Heart left ventricle (tissue), 16 donors: ENCODE measurements at regions of chr15 and their contacts with region 1.

Region 1: DNA sequence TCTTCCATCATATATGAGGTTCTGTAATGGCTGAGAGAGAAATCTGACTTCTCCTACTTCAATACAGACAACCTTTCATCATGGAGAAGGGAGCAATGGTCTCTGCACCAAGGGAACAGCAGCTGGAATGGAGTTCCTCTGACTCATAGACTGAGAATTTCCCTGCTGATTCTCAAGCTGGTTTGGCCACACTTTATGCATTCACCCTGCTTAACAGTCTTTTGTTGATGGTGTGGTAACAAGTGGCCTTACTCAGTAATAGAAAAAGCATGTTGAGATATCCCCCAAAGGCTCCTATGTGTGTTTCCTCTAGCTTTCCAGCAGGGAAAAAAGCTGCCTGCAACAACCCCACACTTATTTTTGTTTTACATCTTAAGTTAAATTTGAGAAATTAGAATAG is 138.1 kb downstream of the GREM1 start:
- DNase-seq: peak in 1 of 5 donors; percentile 6
- ATAC-seq: peak; percentile 51 to 96 (median 90)
- H3K4me3 ChIP-seq: no peak overlapping the region
- H3K27ac ChIP-seq: peak overlapping the region in 1 of 12 donors; percentile 30
- H3K4me1 ChIP-seq: peaks cover 0 to 8% (median 0%) of the 10 kb centered on the region in 12 donors
- H3K27me3 ChIP-seq: no peaks in the 10 kb centered on the region
- CTCF ChIP-seq: no peak
- POLR2A ChIP-seq: no peak

Region 2: GRCh38 chr15:32706704-32707103 is 149.2 kb before region 1 on chr15:
- intact Hi-C with region 1: no loop called
- DNase-seq: no peak
- ATAC-seq: no peak
- H3K4me3 ChIP-seq: no peak overlapping the region
- H3K27ac ChIP-seq: no peak overlapping the region
- H3K4me1 ChIP-seq: no peaks in the 10 kb centered on the region
- H3K27me3 ChIP-seq: peaks cover 0 to 40% (median 0%) of the 10 kb centered on the region in 9 donors
- CTCF ChIP-seq: no peak
- POLR2A ChIP-seq: no peak

Region 3: GRCh38 chr15:32730677-32731654 is 125.0 kb before region 1 on chr15:
- intact Hi-C with region 1: no loop called
- DNase-seq: peak in 1 of 5 donors; percentile 13
- ATAC-seq: peak in 1 of 4 donors; percentile 34
- H3K4me3 ChIP-seq: no peak overlapping the region
- H3K27ac ChIP-seq: no peak overlapping the region
- H3K4me1 ChIP-seq: no peaks in the 10 kb centered on the region
- H3K27me3 ChIP-seq: peaks cover 0 to 18% (median 4%) of the 10 kb centered on the region in 9 donors
- CTCF ChIP-seq: no peak
- POLR2A ChIP-seq: no peak

Region 4: DNA sequence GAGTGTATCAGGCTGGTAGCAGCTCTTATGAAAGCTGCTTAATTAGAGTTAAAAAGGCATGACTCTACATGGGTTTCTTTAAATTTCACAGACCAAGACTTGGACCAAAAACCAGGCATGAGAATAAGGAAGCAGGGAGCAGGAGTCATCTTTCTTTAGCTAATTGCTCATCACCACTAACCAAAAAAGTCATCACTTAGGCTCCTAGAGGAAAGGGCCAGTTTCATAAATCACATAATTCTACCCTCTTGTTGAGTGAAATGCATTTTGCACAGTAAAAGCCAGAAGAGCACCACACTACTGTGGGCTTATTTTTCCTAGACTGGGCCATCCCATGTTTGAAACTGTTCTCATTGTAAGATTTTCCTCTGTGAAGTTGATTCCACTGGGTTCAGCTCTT is 37.5 kb after region 1 on chr15:
- intact Hi-C with region 1: loop called in 1 of 10 experiments (anchors 5 kb)
- DNase-seq: no peak
- ATAC-seq: no peak
- H3K4me3 ChIP-seq: no peak overlapping the region
- H3K27ac ChIP-seq: no peak overlapping the region
- H3K4me1 ChIP-seq: no peaks in the 10 kb centered on the region
- H3K27me3 ChIP-seq: no peaks in the 10 kb centered on the region
- CTCF ChIP-seq: no peak
- POLR2A ChIP-seq: no peak